ENCODE measurements at regions of chr15 and their contacts with region 1.

Region 1: DNA sequence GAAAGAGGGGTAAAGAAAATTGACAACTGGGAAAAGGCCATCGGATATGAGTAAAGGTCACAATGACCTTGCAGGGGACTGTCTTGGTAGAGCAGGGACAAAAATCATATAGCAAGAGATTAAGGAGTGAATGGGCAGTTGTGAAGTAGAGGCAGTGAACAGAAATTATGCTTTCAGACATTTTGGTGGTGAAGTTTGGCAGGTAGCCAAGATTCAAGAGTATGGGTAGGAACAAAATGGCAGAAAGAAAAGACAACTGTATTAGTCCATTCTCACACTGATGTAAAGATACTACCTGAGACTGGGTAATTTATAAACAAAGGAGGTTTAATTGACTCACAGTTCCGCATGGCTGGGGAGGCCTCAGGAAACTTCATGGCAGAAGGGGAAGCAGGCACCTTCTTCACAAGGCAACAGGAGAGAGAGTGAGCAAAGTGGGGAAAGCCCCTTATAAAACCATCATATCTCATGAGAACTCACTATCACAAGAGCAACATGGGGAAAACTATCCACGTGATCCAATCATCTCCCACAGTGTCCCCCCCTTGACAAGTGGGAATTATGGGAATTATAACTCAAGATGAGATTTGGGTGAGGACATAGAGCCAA is 84.0 kb downstream of the CGNL1 start:
- DNase-seq: no peak
- ATAC-seq: no peak
- H3K4me3 ChIP-seq: no peak overlapping the region
- H3K27ac ChIP-seq: no peak overlapping the region
- H3K4me1 ChIP-seq: no peaks in the 10 kb centered on the region
- H3K27me3 ChIP-seq: peaks cover 11 to 34% of the 10 kb centered on the region in 2 experiments; a peak in 4 of 5 replicates
- CTCF ChIP-seq: no peak
- EP300 ChIP-seq: no peak
- POLR2A ChIP-seq: no peak
- RAD21 ChIP-seq: no peak

Region 2: GRCh38 chr15:57487841-57488240 is 27.5 kb after region 1 on chr15:
- CTCF ChIA-PET with region 1: no interaction called
- POLR2A ChIA-PET with region 1: no interaction called
- in situ Hi-C with region 1: no loop called
- intact Hi-C with region 1: loop called (anchors 2 kb)
- DNase-seq: no peak
- ATAC-seq: no peak
- H3K4me3 ChIP-seq: no peak overlapping the region
- H3K27ac ChIP-seq: no peak overlapping the region
- H3K4me1 ChIP-seq: no peaks in the 10 kb centered on the region
- H3K27me3 ChIP-seq: peaks cover 2 to 4% of the 10 kb centered on the region in 2 experiments; a peak in 2 of 5 replicates
- CTCF ChIP-seq: no peak
- EP300 ChIP-seq: no peak
- POLR2A ChIP-seq: no peak
- RAD21 ChIP-seq: no peak

Region 3: GRCh38 chr15:57743424-57743823 is 283.1 kb after region 1 on chr15:
- CTCF ChIA-PET with region 1: no interaction called
- POLR2A ChIA-PET with region 1: no interaction called
- in situ Hi-C with region 1: no loop called
- intact Hi-C with region 1: no loop called
- DNase-seq: peak in 2 of 4 experiments; percentile 15 to 32
- ATAC-seq: peak; percentile 80
- H3K4me3 ChIP-seq: no peak overlapping the region
- H3K27ac ChIP-seq: no peak overlapping the region
- H3K4me1 ChIP-seq: peaks cover 0 to 2% of the 10 kb centered on the region in 2 experiments; a peak in 1 of 5 replicates
- H3K27me3 ChIP-seq: peaks cover 0 to 25% of the 10 kb centered on the region in 2 experiments; a peak in 3 of 5 replicates
- CTCF ChIP-seq: peak; percentile 36 to 47 (median 39); a peak in 5 of 6 replicates
- EP300 ChIP-seq: no peak
- POLR2A ChIP-seq: no peak
- RAD21 ChIP-seq: peak; percentile 34 to 53

Measured in K562 (cell line).